ENCODE measurements at regions of chr3 and their contacts with region 1.

Region 1: GRCh38 chr3:51391075-51391567 is at the start of gene RBM15B:
- DNase-seq: peak; percentile 99
- ATAC-seq: peak; percentile 96
- H3K4me3 Mint-ChIP-seq: peak within 1 kb of the TSS; percentile 81
- H3K27ac Mint-ChIP-seq: peak within 1 kb of the TSS; percentile 89
- H3K4me1 Mint-ChIP-seq: peaks cover 70% of the 10 kb centered on the region
- H3K27me3 Mint-ChIP-seq: no peaks in the 10 kb centered on the region
- total RNA-seq, gene RBM15B: 20.9 to 21.5 TPM

Region 2: DNA sequence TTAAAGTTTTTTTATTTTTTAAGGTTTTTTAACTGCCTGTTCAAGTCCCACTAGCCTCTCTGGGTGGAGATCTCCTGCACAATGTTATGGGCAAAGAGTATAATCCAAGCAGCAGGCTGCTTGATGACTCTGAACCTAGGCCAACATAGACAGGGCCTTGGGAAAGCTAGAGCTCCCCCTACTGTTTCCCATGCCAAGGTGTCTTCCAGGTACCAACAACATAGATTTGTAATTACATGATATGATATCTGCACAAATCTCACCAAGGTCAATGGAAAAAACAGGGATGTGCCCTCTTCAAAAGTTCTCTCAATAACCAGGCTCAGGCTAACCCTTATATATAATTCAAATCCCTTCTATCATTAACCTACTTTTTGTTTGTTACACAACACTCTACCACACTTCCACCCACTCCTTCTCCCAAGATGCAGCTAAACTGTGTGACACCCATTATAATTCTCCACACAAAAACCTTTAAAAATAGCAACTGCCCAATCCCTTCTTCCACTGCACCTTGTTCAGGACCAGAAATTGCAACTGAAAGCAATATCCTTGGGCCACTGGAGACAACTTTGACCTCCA is 43.7 kb after region 1 on chr3:
- CTCF ChIA-PET with region 1: interaction called, 11 read pairs
- POLR2A ChIA-PET with region 1: no interaction called
- intact Hi-C with region 1: loop called in 1 of 2 experiments (anchors 1 kb)
- DNase-seq: peak; percentile 63
- ATAC-seq: peak; percentile 98
- H3K4me3 Mint-ChIP-seq: no peak overlapping the region
- H3K27ac Mint-ChIP-seq: no peak overlapping the region
- H3K4me1 Mint-ChIP-seq: peaks cover 7% of the 10 kb centered on the region
- H3K27me3 Mint-ChIP-seq: no peaks in the 10 kb centered on the region

Region 3: GRCh38 chr3:51682079-51682478 is 291.0 kb after region 1 on chr3:
- CTCF ChIA-PET with region 1: interaction called, 3 read pairs
- POLR2A ChIA-PET with region 1: no interaction called
- intact Hi-C with region 1: loop called in 1 of 2 experiments (anchors 1 kb)
- DNase-seq: peak; percentile 83
- ATAC-seq: peak; percentile 86
- H3K4me3 Mint-ChIP-seq: no peak overlapping the region
- H3K27ac Mint-ChIP-seq: peak overlapping the region; percentile 80
- H3K4me1 Mint-ChIP-seq: peaks cover 92% of the 10 kb centered on the region
- H3K27me3 Mint-ChIP-seq: no peaks in the 10 kb centered on the region

Region 4: GRCh38 chr3:51974963-51975851 is 584.1 kb after region 1 on chr3 and contains the start of gene ABHD14A:
- CTCF ChIA-PET with region 1: no interaction called
- POLR2A ChIA-PET with region 1: no interaction called
- intact Hi-C with region 1: loop called in 1 of 2 experiments (anchors 10 kb)
- DNase-seq: peak; percentile 81
- ATAC-seq: peak; percentile 70
- H3K4me3 Mint-ChIP-seq: peak within 1 kb of the TSS; percentile 97
- H3K27ac Mint-ChIP-seq: peak within 1 kb of the TSS; percentile 97
- H3K4me1 Mint-ChIP-seq: peaks cover 34% of the 10 kb centered on the region
- H3K27me3 Mint-ChIP-seq: no peaks in the 10 kb centered on the region
- total RNA-seq, gene ABHD14A: 6.3 to 7.5 TPM

Region 5: DNA sequence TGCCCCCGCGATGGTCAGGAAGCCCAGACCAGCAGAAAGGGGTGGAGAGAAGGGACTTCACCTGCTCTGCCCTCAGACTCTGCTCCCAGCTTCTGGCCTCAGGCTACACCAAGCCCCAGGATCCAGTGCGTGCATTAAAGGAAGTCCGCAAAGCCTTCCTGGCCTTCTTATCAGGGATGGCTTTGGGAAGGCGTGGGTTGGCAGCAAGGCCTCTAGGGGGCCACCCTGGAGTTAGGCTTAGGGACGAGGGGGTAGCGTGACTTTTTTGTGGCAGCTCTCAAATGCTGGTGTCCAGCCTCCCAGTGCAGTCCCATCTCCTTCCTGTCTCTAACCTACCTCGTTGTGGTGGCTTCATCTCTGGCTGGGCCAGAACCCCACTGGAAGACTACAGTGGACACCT is 623.5 kb after region 1 on chr3:
- CTCF ChIA-PET with region 1: no interaction called
- POLR2A ChIA-PET with region 1: no interaction called
- intact Hi-C with region 1: no loop called
- DNase-seq: no peak
- ATAC-seq: no peak
- H3K4me3 Mint-ChIP-seq: no peak overlapping the region
- H3K27ac Mint-ChIP-seq: no peak overlapping the region
- H3K4me1 Mint-ChIP-seq: no peaks in the 10 kb centered on the region
- H3K27me3 Mint-ChIP-seq: no peaks in the 10 kb centered on the region

Region 6: DNA sequence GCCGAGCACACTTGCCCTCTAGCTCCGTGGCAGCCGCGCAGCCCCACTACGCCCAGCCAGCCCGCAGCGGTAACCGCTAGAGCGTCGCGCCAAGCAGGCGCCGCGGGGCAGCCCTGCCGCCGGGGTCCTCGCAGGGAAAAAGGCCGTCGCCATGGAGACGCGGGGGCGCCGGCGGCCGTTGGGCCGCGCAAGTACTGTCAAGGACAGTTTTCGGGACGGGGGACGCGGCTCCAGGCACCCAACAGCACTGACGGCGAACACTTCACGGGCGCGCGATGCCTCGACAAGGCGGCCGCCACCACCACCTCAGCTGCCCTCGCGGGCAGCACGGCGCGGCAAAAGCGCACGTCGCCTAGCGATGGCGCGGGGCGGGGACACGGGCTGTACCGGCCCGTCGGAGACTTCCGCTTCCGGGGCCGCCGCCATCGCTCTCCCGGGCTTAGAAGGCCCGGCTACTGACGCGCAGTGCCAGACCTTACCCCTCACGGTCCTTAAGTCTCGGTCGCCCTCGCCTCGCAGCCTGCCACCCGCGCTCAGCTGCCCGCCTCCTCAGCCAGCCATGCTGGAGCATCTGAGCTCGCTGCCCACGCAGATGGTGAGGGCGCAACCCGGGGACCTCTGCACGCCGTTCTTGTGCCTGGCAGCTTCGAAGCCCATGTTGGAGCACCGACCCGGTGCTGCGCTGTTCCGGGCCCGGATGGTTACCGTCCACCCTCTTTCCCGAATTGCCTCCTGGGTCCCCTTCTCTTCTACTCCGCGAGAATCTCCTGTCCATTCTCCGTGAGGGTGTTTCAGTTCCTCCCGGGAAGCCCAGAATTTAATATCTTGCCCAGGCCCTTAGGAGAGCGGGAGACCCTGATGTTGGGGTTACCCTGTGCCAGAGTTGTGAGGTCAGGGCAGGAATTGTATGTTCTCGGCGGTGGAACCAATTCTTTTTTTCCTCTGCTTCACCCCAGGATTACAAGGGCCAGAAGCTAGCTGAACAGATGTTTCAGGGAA is 1314.9 kb after region 1 on chr3 and contains the starts of genes GLT8D1 and SPCS1:
- CTCF ChIA-PET with region 1: no interaction called
- POLR2A ChIA-PET with region 1: no interaction called
- intact Hi-C with region 1: loop called in 1 of 2 experiments (anchors 1 kb)
- DNase-seq: peak; percentile 92
- ATAC-seq: peak; percentile 94
- H3K4me3 Mint-ChIP-seq: peak within 1 kb of the TSS; percentile 89
- H3K27ac Mint-ChIP-seq: peak within 1 kb of the TSS; percentile 90
- H3K4me1 Mint-ChIP-seq: peaks cover 28% of the 10 kb centered on the region
- H3K27me3 Mint-ChIP-seq: no peaks in the 10 kb centered on the region
- total RNA-seq, gene GLT8D1: 35.2 to 38.0 TPM
- total RNA-seq, gene SPCS1: 111 to 120 TPM